IMR-90 (cell line): ENCODE measurements at regions of chr1 and their contacts with region 1.

Region 1: DNA sequence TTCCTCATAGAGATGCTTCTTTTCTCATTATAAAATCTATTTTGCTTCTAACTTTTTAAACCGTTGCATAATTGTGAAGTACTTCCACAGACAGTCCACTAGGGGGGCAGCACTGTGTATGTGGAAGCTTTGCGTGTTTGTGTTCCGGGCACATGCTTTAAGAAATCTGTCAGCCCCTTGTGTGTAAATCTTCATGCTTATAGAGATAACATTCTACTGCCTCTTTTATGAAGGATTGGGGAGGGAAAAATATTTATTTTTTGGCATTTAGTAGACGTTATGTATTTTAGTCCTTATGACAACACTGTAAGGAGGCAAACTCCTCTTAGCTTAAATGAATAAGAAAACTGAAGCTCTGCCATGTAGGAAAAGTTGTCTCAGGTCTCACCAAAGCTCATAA is 157.3 kb upstream of the PTGFR start:
- DNase-seq: peak; percentile 58
- ATAC-seq: 0 out of 2 replicates have a peak, but pooled peaks have one; percentile 40
- H3K4me3 ChIP-seq: no peak overlapping the region
- H3K27ac ChIP-seq: no peak overlapping the region
- H3K4me1 ChIP-seq: no peaks in the 10 kb centered on the region
- H3K27me3 ChIP-seq: no peaks in the 10 kb centered on the region
- CTCF ChIP-seq: peak; percentile 50
- POLR2A ChIP-seq: no peak
- RAD21 ChIP-seq: no peak; the same call in 1 of the 2 replicates

Region 2: GRCh38 chr1:78114034-78114956 is 219.2 kb before region 1 on chr1:
- CTCF ChIA-PET with region 1: no interaction called
- POLR2A ChIA-PET with region 1: no interaction called
- dilution Hi-C with region 1: no loop called
- in situ Hi-C with region 1: no loop called
- intact Hi-C with region 1: no loop called
- DNase-seq: peak; percentile 81
- ATAC-seq: peak; percentile 89
- H3K4me3 ChIP-seq: no peak overlapping the region
- H3K27ac ChIP-seq: no peak overlapping the region
- H3K4me1 ChIP-seq: 0 out of 2 replicates have a peak, but pooled peaks cover 2% of the 10 kb centered on the region
- H3K27me3 ChIP-seq: no peaks in the 10 kb centered on the region
- CTCF ChIP-seq: peak; percentile 100
- POLR2A ChIP-seq: 0 out of 2 replicates have a peak, but pooled peaks have one; percentile 26
- RAD21 ChIP-seq: peak; percentile 98

Region 3: DNA sequence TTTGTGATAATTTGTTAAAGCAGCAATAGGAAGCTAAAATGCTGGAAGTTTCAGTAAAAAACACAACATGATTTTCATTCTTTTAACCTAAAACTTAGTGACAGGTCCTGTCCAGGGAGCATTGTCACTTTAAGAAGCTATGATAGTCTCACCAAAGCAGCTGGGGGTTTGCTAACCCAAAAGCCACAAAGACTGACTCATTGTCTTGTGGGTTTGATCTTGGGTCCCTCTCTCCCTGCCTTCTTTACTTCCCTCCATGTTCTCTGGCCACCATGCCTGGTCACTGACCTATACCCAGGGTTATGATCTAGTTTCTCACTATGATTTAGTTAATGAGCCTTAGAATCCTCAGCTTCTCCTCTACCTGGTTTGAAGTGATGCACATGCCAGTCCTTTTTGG is 56.2 kb before region 1 on chr1:
- CTCF ChIA-PET with region 1: interaction called, 3 read pairs
- POLR2A ChIA-PET with region 1: no interaction called
- dilution Hi-C with region 1: no loop called
- in situ Hi-C with region 1: no loop called
- intact Hi-C with region 1: loop called (anchors 10 kb)
- DNase-seq: peak; percentile 85
- ATAC-seq: peak; percentile 33
- H3K4me3 ChIP-seq: no peak overlapping the region
- H3K27ac ChIP-seq: peak overlapping the region; percentile 43
- H3K4me1 ChIP-seq: peaks cover 23% of the 10 kb centered on the region; the same call in 1 of the 2 replicates
- H3K27me3 ChIP-seq: no peaks in the 10 kb centered on the region
- CTCF ChIP-seq: no peak
- POLR2A ChIP-seq: no peak
- RAD21 ChIP-seq: no peak

Region 4: GRCh38 chr1:78370779-78371482 is 37.4 kb after region 1 on chr1:
- CTCF ChIA-PET with region 1: no interaction called
- POLR2A ChIA-PET with region 1: no interaction called
- dilution Hi-C with region 1: no loop called
- in situ Hi-C with region 1: no loop called
- intact Hi-C with region 1: no loop called
- DNase-seq: peak; percentile 89
- ATAC-seq: peak; percentile 71
- H3K4me3 ChIP-seq: no peak overlapping the region
- H3K27ac ChIP-seq: no peak overlapping the region
- H3K4me1 ChIP-seq: peaks cover 2% of the 10 kb centered on the region; the same call in 1 of the 2 replicates
- H3K27me3 ChIP-seq: no peaks in the 10 kb centered on the region
- CTCF ChIP-seq: no peak
- POLR2A ChIP-seq: no peak
- RAD21 ChIP-seq: no peak

Region 5: GRCh38 chr1:78464449-78464891 is 131.0 kb after region 1 on chr1:
- CTCF ChIA-PET with region 1: no interaction called
- POLR2A ChIA-PET with region 1: no interaction called
- dilution Hi-C with region 1: no loop called
- in situ Hi-C with region 1: no loop called
- intact Hi-C with region 1: no loop called
- DNase-seq: peak; percentile 12
- ATAC-seq: no peak
- H3K4me3 ChIP-seq: no peak overlapping the region
- H3K27ac ChIP-seq: no peak overlapping the region
- H3K4me1 ChIP-seq: no peaks in the 10 kb centered on the region
- H3K27me3 ChIP-seq: no peaks in the 10 kb centered on the region
- CTCF ChIP-seq: no peak
- POLR2A ChIP-seq: no peak
- RAD21 ChIP-seq: no peak